Activated naive CD4-positive, alpha-beta T cell treated with anti-CD3 and anti-CD28 coated beads for 36 hours (primary cell): ENCODE measurements at regions of chr1 and their contacts with region 1.

Region 1: DNA sequence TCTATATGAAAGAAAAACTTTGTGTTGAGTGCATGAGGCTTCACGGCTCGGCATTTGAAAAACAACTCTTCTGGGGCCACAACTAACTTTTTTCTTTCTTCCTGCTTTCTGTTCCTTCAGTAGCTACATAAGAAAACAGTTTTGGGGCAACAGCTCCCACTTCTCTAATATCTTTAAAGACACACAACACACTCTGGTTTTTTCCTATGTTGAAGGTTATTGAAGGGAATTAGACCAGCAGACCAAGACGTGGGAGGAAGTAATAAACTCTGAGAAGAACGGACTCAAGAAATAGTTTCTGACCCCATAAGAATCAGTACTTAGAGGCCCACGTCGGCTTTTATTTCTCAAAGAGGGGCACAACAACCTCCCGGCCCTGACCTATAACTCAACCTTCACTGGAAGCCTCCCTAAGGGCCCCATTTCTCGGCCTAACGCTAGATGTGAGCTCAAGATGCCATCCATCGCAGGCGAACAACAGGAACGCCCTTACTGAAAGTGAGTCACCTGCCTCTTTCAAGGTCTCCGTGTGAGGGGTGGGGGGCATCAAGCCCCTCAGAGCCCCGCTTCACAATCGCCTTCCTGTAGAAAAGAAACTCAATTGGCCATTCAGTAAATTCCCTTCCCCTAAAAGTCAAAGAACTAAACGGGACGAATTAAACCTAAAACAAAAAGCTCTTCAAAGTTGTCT is 844 bp downstream of the ZMYM6 start:
- DNase-seq: peak; percentile 64
- H3K4me3 Mint-ChIP-seq: peak overlapping the region; percentile 93
- H3K27ac Mint-ChIP-seq: peak overlapping the region; percentile 93
- H3K4me1 Mint-ChIP-seq: peaks cover 39% of the 10 kb centered on the region
- H3K27me3 Mint-ChIP-seq: no peaks in the 10 kb centered on the region

Region 2: GRCh38 chr1:34800214-34800613 is 230.7 kb before region 1 on chr1:
- CTCF ChIA-PET with region 1: no interaction called
- intact Hi-C with region 1: loop called (anchors 2 kb)
- DNase-seq: peak; percentile 69
- H3K4me3 Mint-ChIP-seq: no peak overlapping the region
- H3K27ac Mint-ChIP-seq: peak overlapping the region; percentile 71
- H3K4me1 Mint-ChIP-seq: peaks cover 39% of the 10 kb centered on the region
- H3K27me3 Mint-ChIP-seq: no peaks in the 10 kb centered on the region

Region 3: GRCh38 chr1:34865981-34866761 is 164.7 kb before region 1 on chr1:
- CTCF ChIA-PET with region 1: interaction called, 3 read pairs
- intact Hi-C with region 1: loop called (anchors 2 kb)
- DNase-seq: peak; percentile 95
- H3K4me3 Mint-ChIP-seq: peak overlapping the region; percentile 79
- H3K27ac Mint-ChIP-seq: peak overlapping the region; percentile 86
- H3K4me1 Mint-ChIP-seq: peaks cover 24% of the 10 kb centered on the region
- H3K27me3 Mint-ChIP-seq: peaks cover 2% of the 10 kb centered on the region

Region 4: GRCh38 chr1:35079003-35079930 is 48.4 kb after region 1 on chr1 and contains the start of gene ZMYM1:
- CTCF ChIA-PET with region 1: interaction called, 3 read pairs
- intact Hi-C with region 1: loop called (anchors 1 kb)
- DNase-seq: peak; percentile 95
- H3K4me3 Mint-ChIP-seq: peak within 1 kb of the TSS; percentile 92
- H3K27ac Mint-ChIP-seq: peak within 1 kb of the TSS; percentile 97
- H3K4me1 Mint-ChIP-seq: peaks cover 32% of the 10 kb centered on the region
- H3K27me3 Mint-ChIP-seq: peaks cover 3% of the 10 kb centered on the region
- total RNA-seq, gene ZMYM1: 7.3 to 7.9 TPM

Region 5: GRCh38 chr1:35298464-35298863 is 267.6 kb after region 1 on chr1:
- CTCF ChIA-PET with region 1: no interaction called
- intact Hi-C with region 1: loop called (anchors 5 kb)
- DNase-seq: peak; percentile 40
- H3K4me3 Mint-ChIP-seq: no peak overlapping the region
- H3K27ac Mint-ChIP-seq: peak overlapping the region; percentile 28
- H3K4me1 Mint-ChIP-seq: peaks cover 13% of the 10 kb centered on the region
- H3K27me3 Mint-ChIP-seq: no peaks in the 10 kb centered on the region

Region 6: DNA sequence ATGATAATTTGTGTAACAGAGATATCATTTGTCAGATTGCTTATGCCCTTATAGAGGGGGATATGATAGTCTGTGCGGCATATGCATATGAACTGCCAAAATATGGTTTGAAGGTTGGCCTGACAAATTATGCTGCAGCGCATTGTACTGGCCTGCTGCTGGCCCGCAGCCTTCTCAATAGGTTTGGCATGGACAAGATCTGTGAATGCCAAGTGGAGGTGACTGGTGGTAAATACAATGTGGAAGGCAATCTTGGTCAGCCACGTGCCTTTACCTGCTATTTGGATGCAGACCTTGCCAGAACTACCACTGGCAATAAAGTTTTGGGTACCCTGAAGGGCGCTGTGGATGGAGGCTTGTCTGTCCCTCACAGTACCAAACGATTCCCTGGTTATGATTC is 320.0 kb after region 1 on chr1:
- CTCF ChIA-PET with region 1: no interaction called
- intact Hi-C with region 1: no loop called
- DNase-seq: no peak
- H3K4me3 Mint-ChIP-seq: no peak overlapping the region
- H3K27ac Mint-ChIP-seq: no peak overlapping the region
- H3K4me1 Mint-ChIP-seq: peaks cover 5% of the 10 kb centered on the region
- H3K27me3 Mint-ChIP-seq: no peaks in the 10 kb centered on the region